AG04449 (cell line): ENCODE measurements at regions of chr3 and their contacts with region 1.

Region 1: DNA sequence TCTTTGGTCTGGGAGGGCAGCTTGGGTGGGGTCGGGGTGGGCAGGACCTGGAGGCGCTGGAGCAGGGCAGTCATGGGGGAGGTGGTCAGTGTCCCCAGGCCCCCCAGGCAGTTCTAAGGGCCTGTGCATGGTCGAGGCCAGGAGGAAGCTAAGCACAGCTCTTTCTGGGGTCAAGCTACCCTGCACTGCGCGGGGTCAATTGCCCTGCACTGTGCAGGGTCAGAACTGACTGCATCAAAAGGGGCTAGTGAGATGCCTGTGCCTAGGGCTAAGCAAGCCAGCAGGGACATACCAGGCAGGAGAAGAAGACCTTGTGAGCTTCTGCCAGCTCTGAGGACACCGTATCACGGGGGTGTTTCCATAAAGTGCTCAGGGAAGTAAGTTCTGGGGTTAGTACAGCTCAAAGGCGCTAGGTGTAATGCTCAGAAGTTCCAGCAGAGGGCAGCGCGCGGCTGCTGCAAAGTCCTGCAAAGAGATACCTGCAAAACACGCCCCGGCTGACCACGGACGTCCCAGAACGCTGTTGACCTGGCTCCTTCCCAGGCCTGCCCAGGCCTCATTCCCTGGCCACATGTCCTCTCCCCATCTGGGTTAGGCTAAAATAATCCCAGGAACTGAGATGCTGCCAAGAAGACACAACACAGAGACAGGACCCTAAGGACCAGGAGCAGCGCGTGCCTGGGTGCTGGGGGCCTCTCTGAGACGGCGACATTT is 18.8 kb upstream of the IQSEC1 start:
- DNase-seq: no peak
- H3K4me3 ChIP-seq: no peak overlapping the region
- CTCF ChIP-seq: peak; percentile 83

Region 2: GRCh38 chr3:13080591-13080990 is 11.5 kb before region 1 on chr3:
- CTCF ChIA-PET with region 1: interaction called, 13 read pairs
- POLR2A ChIA-PET with region 1: no interaction called
- DNase-seq: no peak
- H3K4me3 ChIP-seq: no peak overlapping the region
- CTCF ChIP-seq: no peak

Region 3: GRCh38 chr3:13110678-13111116 is 18.6 kb after region 1 on chr3:
- CTCF ChIA-PET with region 1: interaction called, 69 read pairs
- POLR2A ChIA-PET with region 1: no interaction called
- DNase-seq: no peak
- H3K4me3 ChIP-seq: no peak overlapping the region
- CTCF ChIP-seq: no peak

Region 4: GRCh38 chr3:13186435-13186815 is 94.4 kb after region 1 on chr3:
- CTCF ChIA-PET with region 1: no interaction called
- POLR2A ChIA-PET with region 1: no interaction called
- DNase-seq: no peak
- H3K4me3 ChIP-seq: no peak overlapping the region
- CTCF ChIP-seq: no peak

Region 5: GRCh38 chr3:13452490-13453335 is 360.7 kb after region 1 on chr3:
- CTCF ChIA-PET with region 1: interaction called, 146 read pairs
- POLR2A ChIA-PET with region 1: no interaction called
- DNase-seq: no peak
- H3K4me3 ChIP-seq: peak overlapping the region; percentile 18; the same call in 1 of the 2 replicates
- CTCF ChIP-seq: peak; percentile 49

Region 6: DNA sequence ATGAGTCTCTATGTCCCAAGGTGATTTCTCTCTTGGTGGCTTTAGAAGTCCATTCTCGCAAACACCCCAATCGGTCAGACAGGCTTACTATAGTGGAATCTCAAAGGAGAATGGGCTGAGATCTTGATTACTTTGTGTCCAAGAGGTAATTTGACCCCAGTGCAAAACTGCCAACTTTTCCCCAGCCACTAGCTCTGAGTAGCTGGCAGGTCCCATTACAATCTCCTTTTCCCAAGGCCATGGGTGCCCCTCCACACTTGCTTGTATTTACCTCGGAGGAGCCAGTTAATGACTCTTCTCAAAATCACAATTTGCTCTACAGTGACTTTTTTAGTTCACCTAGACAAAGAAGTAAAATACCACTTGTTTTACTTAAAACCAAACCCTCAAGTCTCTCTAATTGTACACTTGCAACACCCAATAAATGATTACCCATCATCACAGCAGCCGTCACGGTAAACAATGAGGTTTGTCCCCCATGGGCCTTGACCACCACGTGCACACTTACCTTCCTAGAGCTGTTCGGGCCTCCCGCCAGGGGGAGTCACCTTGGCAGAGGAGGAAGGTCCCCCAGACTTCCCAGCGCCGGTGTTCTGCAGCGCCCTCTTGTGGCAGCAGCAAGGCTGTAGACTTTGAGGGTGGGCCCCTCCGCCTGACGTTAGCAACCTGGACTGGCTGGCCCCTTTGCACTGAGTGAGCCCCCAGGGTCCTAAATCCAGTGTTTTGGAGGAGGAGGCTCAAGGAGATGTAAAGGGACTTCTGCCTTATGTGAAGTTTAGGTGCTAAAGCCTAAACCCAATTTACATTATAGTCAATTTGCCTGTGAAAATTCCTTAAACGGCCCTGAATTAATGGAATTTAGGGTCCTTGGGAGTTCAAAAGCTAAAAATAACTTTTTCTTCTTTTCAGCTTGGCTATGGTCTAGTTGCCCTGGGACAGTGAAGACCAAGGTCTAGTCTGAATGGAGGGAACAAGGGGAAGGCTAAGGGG is 369.4 kb after region 1 on chr3:
- CTCF ChIA-PET with region 1: interaction called, 32 read pairs
- POLR2A ChIA-PET with region 1: no interaction called
- DNase-seq: no peak
- H3K4me3 ChIP-seq: no peak overlapping the region
- CTCF ChIP-seq: peak; percentile 70

Region 7: GRCh38 chr3:13479581-13480339 is 387.7 kb after region 1 on chr3 and contains the start of gene HDAC11:
- CTCF ChIA-PET with region 1: interaction called, 26 read pairs
- POLR2A ChIA-PET with region 1: no interaction called
- DNase-seq: peak; percentile 74
- H3K4me3 ChIP-seq: peak within 1 kb of the TSS; percentile 78
- CTCF ChIP-seq: no peak

Region 8: DNA sequence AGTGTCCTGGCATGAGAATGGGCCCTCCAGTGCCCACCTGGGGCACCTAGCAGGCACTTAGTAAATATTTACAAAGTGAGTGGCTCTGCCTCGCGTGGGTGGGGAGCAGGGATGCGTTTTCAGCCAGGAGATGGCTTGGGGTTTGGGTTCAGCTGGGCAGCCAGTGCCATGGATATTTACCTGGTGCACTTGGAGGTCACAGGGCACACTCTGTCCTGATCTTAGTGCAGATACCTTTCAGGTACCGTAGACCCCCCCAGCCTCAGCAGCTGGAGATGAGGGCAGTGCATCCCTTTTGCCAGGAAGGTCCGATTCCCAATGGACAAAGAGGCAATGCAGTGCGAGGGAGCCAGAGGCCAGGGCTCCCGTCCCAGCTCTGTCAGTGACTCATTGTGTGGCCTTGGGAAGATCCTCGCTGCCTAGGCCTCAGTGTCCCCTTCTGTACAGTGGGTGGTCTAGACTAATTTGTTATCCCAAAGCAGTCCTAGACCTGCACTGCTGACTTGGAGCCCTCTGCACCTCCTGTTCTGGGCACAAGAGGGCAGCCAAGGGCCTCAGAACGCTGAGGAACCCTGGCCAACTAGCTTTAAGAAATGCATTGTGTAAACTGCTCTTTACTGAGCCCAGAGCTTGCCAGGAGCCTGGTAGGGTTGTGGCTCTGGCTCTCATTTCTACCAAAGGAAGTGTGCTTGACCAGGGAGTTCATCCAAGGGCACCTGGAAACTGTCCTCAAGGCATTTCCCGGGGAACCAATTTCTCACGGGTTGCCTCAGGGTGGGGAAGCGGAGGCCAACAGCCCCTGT is 404.1 kb after region 1 on chr3:
- CTCF ChIA-PET with region 1: interaction called, 14 read pairs
- POLR2A ChIA-PET with region 1: no interaction called
- DNase-seq: peak; percentile 21
- H3K4me3 ChIP-seq: no peak overlapping the region
- CTCF ChIP-seq: peak; percentile 95